ENCODE measurements at regions of chr12 and their contacts with region 1.

Region 1: GRCh38 chr12:12376646-12377448 is 20.0 kb downstream of the BORCS5 start:
- DNase-seq: peak in 16 of 35 experiments; percentile 14 to 82 (median 26)
- ATAC-seq: peak; percentile 48 to 84 (median 72)
- H3K4me3 ChIP-seq: no peak overlapping the region
- H3K4me3 Mint-ChIP-seq: no peak overlapping the region
- H3K27ac ChIP-seq: no peak overlapping the region
- H3K27ac Mint-ChIP-seq: peak overlapping the region; percentile 61 to 74
- H3K4me1 ChIP-seq: peaks cover 8 to 34% of the 10 kb centered on the region in 2 experiments
- H3K4me1 Mint-ChIP-seq: peaks cover 38 to 52% (median 49%) of the 10 kb centered on the region in 3 donors
- H3K27me3 ChIP-seq: no peaks in the 10 kb centered on the region
- H3K27me3 Mint-ChIP-seq: no peaks in the 10 kb centered on the region

Region 2: DNA sequence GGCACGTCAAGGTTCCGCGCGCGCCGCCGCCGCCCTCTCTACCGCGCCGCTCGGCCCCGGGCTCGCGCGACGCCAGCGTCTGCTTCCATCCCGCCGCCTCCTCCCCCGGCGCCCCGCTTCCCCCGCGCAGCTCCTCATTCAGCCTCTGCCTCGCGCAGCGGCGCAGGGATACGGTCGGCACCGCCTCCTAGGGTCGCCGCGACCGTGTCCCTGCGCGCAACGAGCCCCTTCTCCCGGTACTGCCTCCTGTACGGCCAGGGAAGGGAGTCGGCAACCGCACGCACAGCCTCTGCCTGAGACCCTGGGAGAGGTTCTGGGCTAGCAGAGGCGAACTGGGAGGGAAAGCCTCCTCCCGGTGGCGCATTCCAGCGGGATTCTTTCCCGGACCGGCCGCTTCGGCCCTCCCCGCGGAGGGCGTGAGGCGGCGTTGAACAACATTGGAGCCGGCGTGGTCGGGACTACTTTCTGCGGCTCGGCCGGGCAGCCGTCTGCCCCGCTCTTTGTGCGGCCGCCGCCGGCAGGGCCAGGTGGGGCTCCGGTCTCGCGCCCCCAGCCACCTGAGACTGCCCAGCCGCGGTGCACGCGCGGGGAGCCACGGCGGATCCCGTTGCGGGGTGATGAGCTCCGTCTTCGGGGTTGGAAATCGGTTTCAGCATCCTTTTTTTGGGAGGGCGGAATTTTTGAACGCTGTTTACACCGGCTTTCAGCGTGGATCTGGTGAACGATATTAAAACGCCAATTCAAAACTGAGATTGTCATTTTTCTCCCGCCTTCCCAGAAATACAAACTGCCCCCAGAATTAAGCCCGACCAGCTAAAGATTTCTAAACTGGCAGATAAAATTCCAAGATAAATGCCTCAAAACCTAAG is 109.7 kb before region 1 on chr12 and contains the start of gene LRP6:
- CTCF ChIA-PET with region 1: no interaction called
- POLR2A ChIA-PET with region 1: no interaction called
- DNase-seq: peak; percentile 37 to 80 (median 62)
- ATAC-seq: peak; percentile 92 to 94 (median 94)
- H3K4me3 ChIP-seq: peak within 1 kb of the TSS; percentile 62 to 84
- H3K4me3 Mint-ChIP-seq: peak within 1 kb of the TSS; percentile 79 to 90 (median 84)
- H3K27ac ChIP-seq: no peak within 1 kb of the TSS
- H3K27ac Mint-ChIP-seq: peak within 1 kb of the TSS in 1 of 2 donors; percentile 28
- H3K4me1 ChIP-seq: peaks cover 2 to 16% of the 10 kb centered on the region in 2 experiments
- H3K4me1 Mint-ChIP-seq: peaks cover 22 to 35% (median 24%) of the 10 kb centered on the region in 3 donors
- H3K27me3 ChIP-seq: peaks cover 0 to 36% of the 10 kb centered on the region in 2 experiments
- H3K27me3 Mint-ChIP-seq: peaks cover 0 to 30% of the 10 kb centered on the region in 2 donors
- total RNA-seq, gene LRP6: 4.9 to 8.7 (median 6.3) TPM

Region 3: GRCh38 chr12:12356886-12357718 is 19.7 kb before region 1 on chr12 and contains the start of gene BORCS5:
- CTCF ChIA-PET with region 1: interaction called in 1 of 2 experiments, 19 read pairs
- POLR2A ChIA-PET with region 1: interaction called, 4 to 11 read pairs
- DNase-seq: peak; percentile 97 to 99 (median 98)
- ATAC-seq: peak; percentile 90 to 96 (median 91)
- H3K4me3 ChIP-seq: peak within 1 kb of the TSS; percentile 59 to 73
- H3K4me3 Mint-ChIP-seq: peak within 1 kb of the TSS; percentile 87 to 96 (median 93)
- H3K27ac ChIP-seq: peak within 1 kb of the TSS; percentile 90
- H3K27ac Mint-ChIP-seq: peak within 1 kb of the TSS; percentile 94 to 96
- H3K4me1 ChIP-seq: peaks cover 13 to 36% of the 10 kb centered on the region in 2 experiments
- H3K4me1 Mint-ChIP-seq: peaks cover 50 to 58% (median 54%) of the 10 kb centered on the region in 3 donors
- H3K27me3 ChIP-seq: no peaks in the 10 kb centered on the region
- H3K27me3 Mint-ChIP-seq: no peaks in the 10 kb centered on the region
- total RNA-seq, gene BORCS5: 18.0 to 34.0 (median 25.5) TPM

Region 4: GRCh38 chr12:12403264-12404248 is 26.7 kb after region 1 on chr12:
- CTCF ChIA-PET with region 1: no interaction called
- POLR2A ChIA-PET with region 1: no interaction called
- DNase-seq: peak in 1 of 35 experiments; percentile 44
- ATAC-seq: peak in 3 of 4 experiments; percentile 49 to 89 (median 54)
- H3K4me3 ChIP-seq: no peak overlapping the region
- H3K4me3 Mint-ChIP-seq: no peak overlapping the region
- H3K27ac ChIP-seq: no peak overlapping the region
- H3K27ac Mint-ChIP-seq: peak overlapping the region; percentile 53 to 79
- H3K4me1 ChIP-seq: no peaks in the 10 kb centered on the region
- H3K4me1 Mint-ChIP-seq: peaks cover 26 to 61% (median 48%) of the 10 kb centered on the region in 3 donors
- H3K27me3 ChIP-seq: no peaks in the 10 kb centered on the region
- H3K27me3 Mint-ChIP-seq: no peaks in the 10 kb centered on the region

Region 5: DNA sequence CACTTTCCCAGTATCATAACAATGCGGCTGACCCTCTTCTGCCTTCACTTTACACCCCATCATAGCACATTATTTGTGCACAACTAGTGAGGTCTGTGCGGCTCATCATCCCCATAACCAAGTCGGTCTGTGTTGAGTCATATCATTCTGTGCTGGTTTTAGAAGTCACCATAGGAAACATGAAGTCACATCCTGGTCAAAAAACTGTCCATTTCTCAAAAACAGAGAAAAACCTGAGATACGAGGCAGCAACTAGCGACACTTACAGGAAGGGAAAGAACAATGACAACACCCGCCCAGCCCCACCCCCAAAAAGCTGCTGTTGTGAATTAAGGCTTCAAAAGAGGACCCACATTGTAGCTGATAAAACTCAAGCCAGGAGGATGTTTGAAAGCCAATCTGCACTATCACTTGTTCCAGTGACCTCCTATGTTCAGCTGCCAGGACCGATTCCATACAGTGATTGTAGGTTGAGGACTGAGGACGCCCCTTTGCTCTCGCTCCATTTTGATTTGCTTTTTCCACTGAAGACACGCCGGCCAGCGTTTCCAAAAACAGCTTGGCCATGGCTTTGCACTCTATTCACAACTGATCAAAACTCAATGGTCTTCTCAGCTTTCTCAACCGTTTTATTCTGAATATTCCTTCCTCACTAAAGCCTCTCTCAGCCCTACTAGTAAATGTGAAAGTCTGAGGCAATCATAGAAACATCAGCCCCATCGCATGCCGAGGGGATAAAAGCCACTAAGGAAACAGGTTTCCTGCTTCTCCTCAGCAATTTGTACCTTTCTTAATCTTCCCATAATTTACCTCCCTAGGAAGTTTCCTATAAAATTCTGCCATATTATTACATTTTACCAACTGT is 98.3 kb after region 1 on chr12:
- CTCF ChIA-PET with region 1: interaction called in 1 of 2 experiments, 19 read pairs
- POLR2A ChIA-PET with region 1: interaction called, 4 to 8 read pairs
- DNase-seq: peak in 32 of 35 experiments; percentile 22 to 75 (median 50)
- ATAC-seq: peak; percentile 68 to 82 (median 80)
- H3K4me3 ChIP-seq: peak overlapping the region in 1 of 2 donors; percentile 25
- H3K4me3 Mint-ChIP-seq: peak overlapping the region; percentile 22 to 53 (median 44)
- H3K27ac ChIP-seq: peak overlapping the region; percentile 84
- H3K27ac Mint-ChIP-seq: peak overlapping the region; percentile 93 to 96
- H3K4me1 ChIP-seq: peaks cover 2 to 27% of the 10 kb centered on the region in 2 experiments
- H3K4me1 Mint-ChIP-seq: peaks cover 37 to 82% (median 75%) of the 10 kb centered on the region in 3 donors
- H3K27me3 ChIP-seq: no peaks in the 10 kb centered on the region
- H3K27me3 Mint-ChIP-seq: no peaks in the 10 kb centered on the region

Region 6: DNA sequence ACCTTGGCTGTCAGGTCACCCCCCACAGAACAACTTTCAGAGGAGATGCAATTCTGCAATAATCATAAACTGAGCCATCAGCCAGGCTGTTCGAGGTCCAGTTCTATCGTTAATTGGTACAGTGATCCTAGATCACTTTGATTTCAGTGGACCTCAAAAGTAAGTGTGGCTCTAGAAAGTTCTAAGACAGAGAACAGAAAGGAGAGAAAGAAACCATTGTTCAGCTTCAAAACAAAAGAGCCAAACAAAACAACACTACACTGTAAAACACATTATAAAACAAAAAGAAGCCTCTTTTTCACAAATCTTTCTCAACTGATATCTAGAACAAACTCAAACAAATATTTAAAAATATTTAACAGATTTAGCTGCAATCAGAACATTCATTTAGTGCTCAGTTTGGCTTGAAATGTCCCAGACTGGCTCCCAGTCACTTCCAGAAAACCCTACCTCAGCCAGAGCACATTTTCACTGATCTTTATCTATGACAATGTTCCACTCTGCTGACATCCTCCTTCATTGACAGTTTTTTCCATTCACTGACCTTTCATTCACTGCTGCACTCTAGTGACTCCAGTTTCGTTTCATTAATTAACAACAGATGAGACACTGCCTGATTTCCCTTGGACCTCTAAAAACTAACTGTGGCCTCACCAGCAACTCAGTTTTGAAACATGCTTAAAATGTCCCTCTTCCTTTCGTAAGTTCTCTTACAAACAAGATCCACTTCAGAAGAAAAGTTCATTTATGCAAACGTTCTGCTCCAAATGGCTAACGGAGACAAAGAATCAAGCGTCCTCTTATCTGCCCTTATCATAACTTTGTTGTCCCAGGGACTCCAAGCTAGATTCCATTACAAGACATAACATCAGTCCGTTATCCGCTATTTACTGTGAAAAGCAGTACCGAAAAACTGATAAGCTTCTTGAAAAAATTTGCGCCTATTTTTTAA is 129.0 kb after region 1 on chr12:
- CTCF ChIA-PET with region 1: interaction called in 1 of 2 experiments, 23 read pairs
- POLR2A ChIA-PET with region 1: interaction called in 1 of 2 experiments, 6 read pairs
- DNase-seq: no peak
- ATAC-seq: peak in 1 of 4 experiments; percentile 43
- H3K4me3 ChIP-seq: no peak overlapping the region
- H3K4me3 Mint-ChIP-seq: peak overlapping the region; percentile 30 to 52 (median 42)
- H3K27ac ChIP-seq: no peak overlapping the region
- H3K27ac Mint-ChIP-seq: peak overlapping the region; percentile 70 to 84
- H3K4me1 ChIP-seq: peaks cover 0 to 22% of the 10 kb centered on the region in 2 experiments
- H3K4me1 Mint-ChIP-seq: peaks cover 38 to 79% (median 48%) of the 10 kb centered on the region in 3 donors
- H3K27me3 ChIP-seq: no peaks in the 10 kb centered on the region
- H3K27me3 Mint-ChIP-seq: no peaks in the 10 kb centered on the region

Region 7: GRCh38 chr12:12654691-12655460 is 278.0 kb after region 1 on chr12:
- CTCF ChIA-PET with region 1: interaction called, 5 to 20 read pairs
- POLR2A ChIA-PET with region 1: no interaction called
- DNase-seq: no peak
- ATAC-seq: no peak
- H3K4me3 ChIP-seq: no peak overlapping the region
- H3K4me3 Mint-ChIP-seq: no peak overlapping the region
- H3K27ac ChIP-seq: no peak overlapping the region
- H3K27ac Mint-ChIP-seq: no peak overlapping the region
- H3K4me1 ChIP-seq: peaks cover 0 to 8% of the 10 kb centered on the region in 2 experiments
- H3K4me1 Mint-ChIP-seq: peaks cover 12 to 13% (median 13%) of the 10 kb centered on the region in 3 donors
- H3K27me3 ChIP-seq: no peaks in the 10 kb centered on the region
- H3K27me3 Mint-ChIP-seq: no peaks in the 10 kb centered on the region

Region 8: DNA sequence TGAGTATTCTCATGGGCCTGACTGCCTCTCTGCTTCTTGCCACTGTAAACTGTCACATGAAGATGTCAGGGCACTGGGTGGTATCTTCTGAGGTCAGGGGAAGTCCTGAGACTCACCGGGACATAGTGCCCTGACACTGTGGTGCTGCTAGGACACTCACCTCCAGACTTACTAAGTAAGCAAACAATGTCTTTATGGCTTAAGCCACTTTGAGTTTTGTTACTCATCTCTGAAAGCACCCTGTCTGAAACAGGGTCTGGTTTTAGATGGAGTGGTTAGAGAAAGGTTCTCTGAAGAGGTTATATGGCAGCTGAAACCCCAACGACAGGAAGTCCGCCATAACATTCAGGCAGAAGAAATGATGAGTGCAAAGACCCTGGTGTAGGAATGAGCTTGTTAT is 296.4 kb after region 1 on chr12:
- CTCF ChIA-PET with region 1: no interaction called
- POLR2A ChIA-PET with region 1: no interaction called
- DNase-seq: no peak
- ATAC-seq: no peak
- H3K4me3 ChIP-seq: no peak overlapping the region
- H3K4me3 Mint-ChIP-seq: no peak overlapping the region
- H3K27ac ChIP-seq: no peak overlapping the region
- H3K27ac Mint-ChIP-seq: no peak overlapping the region
- H3K4me1 ChIP-seq: no peaks in the 10 kb centered on the region
- H3K4me1 Mint-ChIP-seq: peaks cover 0 to 5% (median 0%) of the 10 kb centered on the region in 3 donors
- H3K27me3 ChIP-seq: no peaks in the 10 kb centered on the region
- H3K27me3 Mint-ChIP-seq: no peaks in the 10 kb centered on the region

Measured in T-cell (primary cell).